ENCODE measurements at regions of chr6 and their contacts with region 1.

Region 1: DNA sequence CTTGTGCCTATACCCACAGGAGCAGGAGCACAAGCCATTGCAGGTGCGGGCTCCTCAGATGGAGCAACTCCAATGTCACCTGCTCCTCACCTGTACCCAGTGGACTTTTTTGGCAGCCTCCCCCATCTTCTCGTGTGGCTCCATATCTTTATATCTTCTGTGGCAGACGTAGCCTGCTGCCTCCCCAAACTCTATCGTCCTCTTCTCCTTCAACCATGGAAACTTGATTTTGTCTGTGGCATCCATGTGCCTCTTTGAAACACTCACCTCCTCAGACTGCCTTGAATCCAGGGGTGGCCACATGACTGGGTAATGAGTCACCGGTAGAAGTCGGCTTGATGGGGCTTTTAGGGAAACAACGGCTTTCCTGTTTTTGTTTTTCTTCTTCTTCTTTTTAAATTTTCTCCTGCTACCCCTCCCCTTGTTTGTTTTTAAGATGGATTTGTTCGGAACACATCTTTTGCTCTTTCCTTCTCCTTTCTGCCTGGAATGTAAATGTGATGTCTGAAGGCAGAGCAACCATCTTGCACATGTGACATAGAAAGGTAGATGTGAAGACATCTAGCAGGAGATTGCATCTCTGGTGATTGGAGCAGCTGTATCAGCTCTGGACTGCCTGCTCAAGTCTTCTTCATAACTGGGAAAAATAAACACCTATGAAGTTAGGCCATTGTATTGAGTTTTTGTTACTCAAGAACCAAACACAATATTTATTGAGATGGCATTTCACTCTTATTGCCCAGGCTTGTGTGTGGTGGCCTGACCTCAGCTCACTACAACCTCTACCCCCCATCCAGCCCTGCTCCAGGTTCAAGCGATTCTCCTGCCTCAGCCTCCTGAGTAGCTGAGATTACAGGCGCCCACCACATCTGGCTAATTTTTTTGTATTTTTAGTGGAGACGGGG is 69.9 kb upstream of the DDR1 start:
- DNase-seq: no peak
- ATAC-seq: 0 out of 3 replicates have a peak, but pooled peaks have one; percentile 5
- H3K4me3 ChIP-seq: no peak overlapping the region
- H3K27ac ChIP-seq: peak overlapping the region; percentile 52
- H3K4me1 ChIP-seq: peaks cover 50% of the 10 kb centered on the region
- H3K27me3 ChIP-seq: no peaks in the 10 kb centered on the region
- CTCF ChIP-seq: no peak
- EP300 ChIP-seq: no peak
- POLR2A ChIP-seq: no peak
- RAD21 ChIP-seq: no peak

Region 2: DNA sequence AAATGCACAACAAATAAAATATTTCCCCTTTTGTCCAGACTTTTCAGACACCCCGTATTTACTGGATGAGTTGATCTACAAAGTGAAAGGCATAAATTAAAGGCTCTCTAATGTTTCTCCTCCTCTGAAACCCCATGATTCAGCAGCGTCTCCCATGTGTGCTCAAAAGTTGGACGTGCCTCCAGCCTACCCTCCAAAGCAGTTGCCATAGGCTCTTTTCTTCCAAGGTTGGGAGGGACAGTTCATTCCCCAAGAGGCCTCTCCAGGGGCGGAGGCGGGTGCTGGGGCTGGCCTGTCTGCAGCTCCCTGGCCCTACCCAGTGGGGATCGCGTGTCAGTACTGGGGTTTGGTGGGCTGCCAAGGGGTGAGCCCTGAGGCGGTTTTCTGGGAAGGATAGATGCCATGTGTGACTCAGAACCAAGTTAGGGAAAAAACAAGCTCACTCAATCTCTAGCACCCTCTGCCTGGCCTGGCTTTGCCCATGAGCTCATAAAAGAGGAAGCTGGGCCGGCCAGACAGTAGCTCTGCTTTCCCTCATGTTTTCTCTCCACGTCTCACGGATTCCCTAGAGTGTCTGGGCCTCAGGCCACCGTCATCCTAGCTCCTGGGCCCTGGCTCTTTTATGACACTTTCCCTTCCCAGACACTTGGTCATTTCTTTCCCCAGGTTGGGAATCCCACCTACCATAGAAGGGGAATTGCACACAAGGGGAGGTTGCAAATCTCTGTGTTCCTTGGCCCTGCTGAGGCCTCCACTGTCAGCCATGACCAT is 62.0 kb before region 1 on chr6:
- CTCF ChIA-PET with region 1: interaction called, 23 read pairs
- POLR2A ChIA-PET with region 1: interaction called, 31 read pairs
- RAD21 ChIA-PET with region 1: interaction called, 39 read pairs
- SMC1A ChIA-PET with region 1: interaction called, 63 read pairs
- in situ Hi-C with region 1: no loop called
- intact Hi-C with region 1: no loop called
- DNase-seq: no peak
- ATAC-seq: peak; percentile 56
- H3K4me3 ChIP-seq: no peak overlapping the region
- H3K27ac ChIP-seq: no peak overlapping the region
- H3K4me1 ChIP-seq: peaks cover 3% of the 10 kb centered on the region; the same call in 1 of the 2 replicates
- H3K27me3 ChIP-seq: no peaks in the 10 kb centered on the region
- CTCF ChIP-seq: no peak
- EP300 ChIP-seq: no peak
- POLR2A ChIP-seq: no peak
- RAD21 ChIP-seq: no peak

Region 3: DNA sequence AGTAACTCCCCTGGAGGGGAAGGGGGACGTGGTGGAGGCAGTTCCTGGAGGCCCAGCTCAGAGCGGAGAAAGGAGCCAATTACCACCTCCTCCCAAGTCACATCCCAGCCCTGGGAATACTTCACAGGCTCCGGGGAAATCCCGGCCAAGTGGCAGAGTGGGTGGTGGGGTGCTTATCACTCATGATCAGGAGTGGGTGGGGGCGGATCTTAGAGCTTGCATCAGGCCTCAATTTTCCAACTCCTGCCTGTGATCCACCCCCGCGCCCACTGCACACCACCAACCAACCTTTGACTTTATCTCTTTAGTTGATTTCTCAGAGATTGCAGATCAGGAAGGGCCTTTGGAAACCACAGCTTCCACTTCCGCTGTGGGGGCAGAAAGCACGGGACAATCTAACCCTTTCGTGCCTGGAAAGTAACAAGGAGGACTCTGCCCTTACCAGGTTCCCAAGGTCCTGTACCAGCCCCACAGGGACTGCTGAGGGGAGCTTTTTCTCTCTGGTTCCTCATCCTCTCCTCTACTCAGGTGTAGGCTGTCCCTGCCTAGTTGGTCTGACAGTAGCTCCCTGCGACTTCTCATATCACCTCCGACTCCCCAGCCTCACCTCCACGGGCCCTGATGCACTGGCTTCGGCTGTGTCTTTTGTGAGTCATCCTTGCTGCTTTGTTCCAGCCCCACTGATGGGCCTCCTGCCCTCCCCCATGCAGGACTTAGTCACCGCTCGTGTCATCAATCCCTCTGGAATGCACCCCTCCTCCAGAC is 45.1 kb before region 1 on chr6:
- CTCF ChIA-PET with region 1: interaction called, 29 read pairs
- POLR2A ChIA-PET with region 1: interaction called, 77 read pairs
- RAD21 ChIA-PET with region 1: interaction called, 98 read pairs
- SMC1A ChIA-PET with region 1: interaction called, 217 read pairs
- in situ Hi-C with region 1: no loop called
- intact Hi-C with region 1: no loop called
- DNase-seq: no peak
- ATAC-seq: peak; percentile 38
- H3K4me3 ChIP-seq: no peak overlapping the region
- H3K27ac ChIP-seq: no peak overlapping the region; the same call in 1 of the 2 replicates
- H3K4me1 ChIP-seq: peaks cover 33% of the 10 kb centered on the region
- H3K27me3 ChIP-seq: no peaks in the 10 kb centered on the region
- CTCF ChIP-seq: no peak
- EP300 ChIP-seq: peak in 1 of 2 experiments; percentile 56; a peak in 2 of 4 replicates
- POLR2A ChIP-seq: no peak
- RAD21 ChIP-seq: no peak

Region 4: DNA sequence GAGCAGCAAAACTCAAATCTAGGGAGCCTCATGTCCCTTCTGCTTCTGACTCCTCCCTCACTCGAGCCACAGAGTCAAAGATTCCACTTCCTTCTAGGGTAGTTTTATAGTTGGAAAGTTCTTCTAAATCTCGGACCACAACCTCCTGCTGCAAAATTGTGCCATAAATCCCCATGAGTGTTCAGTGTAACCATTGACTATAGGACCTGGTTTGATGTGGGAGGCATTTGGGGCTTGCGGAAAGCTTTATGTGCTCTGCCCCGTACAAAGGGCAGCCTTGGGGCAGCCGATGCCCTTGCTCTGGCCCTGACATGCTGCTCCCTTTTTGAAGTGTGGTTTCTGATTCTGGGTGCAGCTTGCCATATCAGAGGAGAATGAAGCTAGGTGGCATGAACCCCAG is 26.4 kb before region 1 on chr6:
- CTCF ChIA-PET with region 1: interaction called, 15 read pairs
- POLR2A ChIA-PET with region 1: interaction called, 10 read pairs
- RAD21 ChIA-PET with region 1: interaction called, 19 read pairs
- SMC1A ChIA-PET with region 1: interaction called, 31 read pairs
- in situ Hi-C with region 1: no loop called
- intact Hi-C with region 1: no loop called
- DNase-seq: no peak
- ATAC-seq: peak; percentile 51
- H3K4me3 ChIP-seq: no peak overlapping the region
- H3K27ac ChIP-seq: no peak overlapping the region
- H3K4me1 ChIP-seq: peaks cover 6% of the 10 kb centered on the region; the same call in 1 of the 2 replicates
- H3K27me3 ChIP-seq: no peaks in the 10 kb centered on the region
- CTCF ChIP-seq: no peak
- EP300 ChIP-seq: no peak
- POLR2A ChIP-seq: no peak
- RAD21 ChIP-seq: no peak

Region 5: DNA sequence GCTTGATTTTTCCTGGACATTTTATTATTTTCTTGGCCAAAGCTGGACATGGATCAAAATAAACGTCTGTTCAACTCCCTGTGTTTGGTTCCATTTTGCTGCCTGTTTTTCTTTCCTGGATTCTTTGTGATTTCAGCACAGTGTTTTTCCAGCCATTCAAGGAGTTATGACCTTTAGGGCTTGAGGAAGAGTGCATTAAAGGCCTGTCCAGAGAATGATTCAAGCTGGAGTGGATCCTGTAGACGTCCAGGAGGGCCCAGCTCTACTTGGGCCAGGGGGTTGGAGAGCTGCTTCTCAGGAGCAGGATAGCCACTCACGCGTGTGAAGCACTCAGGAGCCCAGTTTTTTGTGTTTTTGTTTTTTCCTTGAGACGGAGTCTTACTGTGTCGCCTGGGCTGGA is 13.5 kb before region 1 on chr6:
- CTCF ChIA-PET with region 1: interaction called, 4 read pairs
- POLR2A ChIA-PET with region 1: interaction called, 14 read pairs
- RAD21 ChIA-PET with region 1: interaction called, 4 read pairs
- SMC1A ChIA-PET with region 1: interaction called, 14 read pairs
- in situ Hi-C with region 1: no loop called
- intact Hi-C with region 1: no loop called
- DNase-seq: no peak
- ATAC-seq: no peak
- H3K4me3 ChIP-seq: no peak overlapping the region
- H3K27ac ChIP-seq: no peak overlapping the region
- H3K4me1 ChIP-seq: no peaks in the 10 kb centered on the region
- H3K27me3 ChIP-seq: no peaks in the 10 kb centered on the region
- CTCF ChIP-seq: no peak
- EP300 ChIP-seq: no peak
- POLR2A ChIP-seq: no peak
- RAD21 ChIP-seq: no peak

Region 6: GRCh38 chr6:31216208-31216898 is 402.0 kb after region 1 on chr6:
- CTCF ChIA-PET with region 1: no interaction called
- POLR2A ChIA-PET with region 1: no interaction called
- RAD21 ChIA-PET with region 1: no interaction called
- SMC1A ChIA-PET with region 1: no interaction called
- in situ Hi-C with region 1: no loop called
- intact Hi-C with region 1: no loop called
- DNase-seq: no peak
- ATAC-seq: peak; percentile 44
- H3K4me3 ChIP-seq: no peak overlapping the region
- H3K27ac ChIP-seq: no peak overlapping the region
- H3K4me1 ChIP-seq: no peaks in the 10 kb centered on the region
- H3K27me3 ChIP-seq: no peaks in the 10 kb centered on the region
- CTCF ChIP-seq: no peak
- EP300 ChIP-seq: no peak
- POLR2A ChIP-seq: no peak
- RAD21 ChIP-seq: no peak

Measured in GM12878 (cell line).